Pancreas (tissue), 10 donors: ENCODE measurements at regions of chr1 and their contacts with region 1.

Region 1: DNA sequence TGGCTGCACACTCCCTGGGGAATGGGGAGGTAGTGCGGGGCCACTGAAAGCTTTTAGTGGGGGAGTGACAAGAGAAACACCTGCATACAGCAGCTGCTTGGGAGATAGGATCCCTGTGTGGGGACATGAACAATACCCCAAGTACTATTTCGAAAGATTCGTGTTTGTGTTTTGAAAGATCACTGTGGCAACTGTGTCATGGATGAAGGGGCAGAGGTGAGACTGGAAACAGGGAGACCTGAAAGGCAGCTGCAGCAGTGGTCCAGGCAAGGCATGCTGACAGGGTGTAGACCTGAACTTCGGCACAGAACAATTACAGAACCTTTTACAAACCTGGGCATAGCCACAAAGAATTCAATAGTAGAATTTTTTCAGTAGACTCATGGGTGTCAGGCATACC is 32.9 kb downstream of the TENT5C start:
- DNase-seq: no peak
- ATAC-seq: no peak
- H3K4me3 ChIP-seq: no peak overlapping the region
- H3K27ac ChIP-seq: no peak overlapping the region
- H3K4me1 ChIP-seq: no peaks in the 10 kb centered on the region
- H3K27me3 ChIP-seq: no peaks in the 10 kb centered on the region
- CTCF ChIP-seq: no peak

Region 2: GRCh38 chr1:117367047-117368018 is 271.4 kb before region 1 on chr1 and contains the start of gene MAN1A2:
- intact Hi-C with region 1: no loop called
- DNase-seq: peak; percentile 92 to 97 (median 94)
- ATAC-seq: peak; percentile 83 to 87 (median 85)
- H3K4me3 ChIP-seq: peak within 1 kb of the TSS; percentile 65 to 96 (median 78)
- H3K27ac ChIP-seq: peak within 1 kb of the TSS; percentile 93 to 96 (median 96)
- H3K4me1 ChIP-seq: peaks cover 4 to 14% (median 8%) of the 10 kb centered on the region in 3 donors
- H3K27me3 ChIP-seq: no peaks in the 10 kb centered on the region
- CTCF ChIP-seq: no peak
- total RNA-seq, gene MAN1A2: 37.4 to 50.7 (median 45.7) TPM

Region 3: DNA sequence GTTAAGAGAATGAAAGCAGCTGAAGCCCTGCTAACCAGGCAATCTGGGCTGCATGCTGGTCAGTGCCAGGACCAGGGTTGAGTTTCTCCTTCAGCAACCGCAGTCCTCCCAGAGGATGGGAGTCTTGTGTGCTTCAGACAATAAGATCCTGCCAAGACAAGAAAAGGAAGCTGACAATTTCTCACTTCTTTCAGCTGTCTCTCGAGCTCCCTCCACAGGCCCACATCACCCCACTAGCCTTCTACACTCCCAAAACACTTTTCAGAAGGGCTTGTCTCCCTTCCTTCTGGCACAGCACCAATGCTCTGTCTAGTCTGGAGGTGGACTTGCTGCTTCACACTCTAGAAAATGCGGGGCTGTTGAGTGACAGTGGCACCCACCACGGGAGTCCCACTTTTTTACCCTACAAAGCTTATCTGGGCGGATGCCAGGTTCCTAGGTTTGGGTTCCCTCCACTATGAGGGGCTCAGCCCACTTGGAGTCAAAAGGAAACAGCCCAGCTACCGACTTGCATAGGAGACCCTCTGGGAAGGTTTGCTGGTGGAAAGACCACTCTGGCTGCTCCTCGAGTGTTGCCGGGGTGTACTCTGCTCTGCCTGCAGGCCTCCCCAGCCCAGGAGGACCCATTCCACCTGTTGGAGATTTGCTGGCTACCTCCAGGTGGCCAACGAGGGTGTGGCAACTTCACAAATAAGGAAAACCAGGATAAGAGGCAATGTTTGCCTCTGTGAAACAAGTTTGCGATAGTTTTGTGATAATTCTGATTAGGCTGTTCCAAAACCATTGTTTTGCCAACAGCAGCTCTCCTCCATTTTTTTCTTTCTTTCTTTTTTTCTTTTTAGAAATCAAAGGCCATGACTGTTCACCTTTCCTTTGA is 36.0 kb after region 1 on chr1:
- intact Hi-C with region 1: loop called in 1 of 3 experiments (anchors 5 kb)
- DNase-seq: peak in 2 of 6 donors; percentile 43 to 63
- ATAC-seq: peak; percentile 35 to 74 (median 58)
- H3K4me3 ChIP-seq: no peak overlapping the region
- H3K27ac ChIP-seq: peak overlapping the region in 2 of 4 donors; percentile 12 to 67
- H3K4me1 ChIP-seq: peaks cover 13 to 31% (median 23%) of the 10 kb centered on the region in 3 donors
- H3K27me3 ChIP-seq: no peaks in the 10 kb centered on the region
- CTCF ChIP-seq: no peak